ENCODE measurements at regions of chr14 and their contacts with region 1.

Region 1: DNA sequence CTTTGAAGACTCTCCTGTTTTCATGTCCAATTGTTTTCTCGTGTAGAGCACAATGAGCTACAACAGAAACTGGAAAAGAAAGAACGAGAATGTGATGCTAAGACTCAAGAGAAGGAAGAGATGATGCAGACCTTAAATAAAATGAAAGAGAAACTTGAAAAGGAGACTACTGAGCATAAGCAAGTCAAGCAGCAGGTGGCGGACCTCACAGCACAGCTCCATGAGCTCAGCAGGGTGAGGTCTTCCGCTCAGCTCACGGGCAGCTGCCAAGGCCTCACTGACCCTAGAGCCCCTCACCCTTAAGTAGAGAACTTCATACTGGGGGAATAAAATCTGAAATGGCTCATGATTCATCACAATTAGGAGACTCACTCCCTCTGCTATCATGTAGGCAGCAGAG is 134.7 kb downstream of the GPR135 start:
- DNase-seq: no peak
- H3K4me3 ChIP-seq: no peak overlapping the region
- H3K27ac ChIP-seq: no peak overlapping the region
- H3K4me1 ChIP-seq: peaks cover 11% of the 10 kb centered on the region
- H3K27me3 ChIP-seq: no peaks in the 10 kb centered on the region
- CTCF ChIP-seq: no peak

Region 2: GRCh38 chr14:58832095-58832521 is 498.3 kb before region 1 on chr14:
- CTCF ChIA-PET with region 1: no interaction called
- dilution Hi-C with region 1: no loop called
- in situ Hi-C with region 1: no loop called
- intact Hi-C with region 1: no loop called
- DNase-seq: peak; percentile 8
- H3K4me3 ChIP-seq: no peak overlapping the region
- H3K27ac ChIP-seq: no peak overlapping the region
- H3K4me1 ChIP-seq: peaks cover 6% of the 10 kb centered on the region
- H3K27me3 ChIP-seq: no peaks in the 10 kb centered on the region
- CTCF ChIP-seq: no peak

Region 3: DNA sequence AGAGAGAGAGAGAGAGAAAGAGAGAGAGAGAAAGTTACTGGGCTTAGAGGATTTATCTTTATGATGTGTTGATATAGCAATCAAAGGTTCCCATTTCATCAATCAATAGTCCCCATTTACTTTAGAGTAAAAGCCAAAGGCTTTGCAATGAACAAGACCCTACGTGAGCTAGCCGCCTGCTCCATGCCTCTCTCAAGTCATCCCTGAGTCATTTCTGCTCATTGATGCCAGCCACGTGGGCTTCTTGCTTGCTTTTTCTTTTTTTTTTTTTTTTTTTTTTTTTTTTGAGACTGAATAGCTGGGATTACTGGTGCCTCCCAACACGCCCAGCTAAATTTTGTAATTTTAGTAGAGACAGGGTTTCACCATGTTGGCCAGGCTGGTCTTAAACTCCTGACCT is 63.8 kb after region 1 on chr14:
- CTCF ChIA-PET with region 1: interaction called, 10 read pairs
- dilution Hi-C with region 1: no loop called
- in situ Hi-C with region 1: no loop called
- intact Hi-C with region 1: no loop called
- DNase-seq: peak; percentile 42
- H3K4me3 ChIP-seq: no peak overlapping the region
- H3K27ac ChIP-seq: no peak overlapping the region
- H3K4me1 ChIP-seq: no peaks in the 10 kb centered on the region
- H3K27me3 ChIP-seq: no peaks in the 10 kb centered on the region
- CTCF ChIP-seq: no peak